Uterus (tissue), 4 donors: ENCODE measurements at regions of chr10 and their contacts with region 1.

Region 1: DNA sequence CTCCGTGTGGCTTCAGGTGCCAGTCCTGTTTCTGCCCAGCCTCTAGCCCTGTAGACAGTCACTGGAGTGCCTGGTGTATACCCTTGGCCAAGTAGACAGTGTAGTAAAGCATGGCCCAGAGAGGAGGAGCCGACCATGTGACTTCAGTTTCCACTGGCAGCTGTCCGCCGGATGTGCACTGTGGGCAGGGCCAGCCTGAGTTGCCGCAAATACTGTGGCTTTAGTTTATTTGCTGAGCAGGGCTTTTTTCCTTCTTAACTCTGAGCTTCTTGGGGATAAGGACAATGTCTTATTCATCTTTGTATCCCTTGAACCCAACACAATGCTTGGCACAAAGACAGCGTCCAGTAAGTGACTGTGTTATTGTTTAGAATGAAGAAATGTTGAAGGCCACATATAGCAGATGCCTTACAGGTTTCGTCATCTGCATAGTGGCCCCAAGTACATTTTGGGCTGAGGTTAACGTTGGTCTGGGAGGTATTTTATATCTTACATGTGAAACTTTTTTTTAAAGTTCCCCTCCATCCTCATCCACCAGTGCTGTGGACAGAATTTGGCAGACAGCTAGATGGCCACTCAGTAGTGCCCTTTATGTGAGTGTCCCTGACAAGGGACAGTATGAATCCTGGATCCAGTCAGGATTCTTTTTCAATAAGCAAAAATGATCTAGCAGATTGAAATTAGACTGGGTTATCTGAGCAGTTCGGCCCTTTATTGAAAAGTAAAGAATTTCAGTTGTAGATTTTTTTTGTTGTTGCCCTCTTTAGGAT is 40.6 kb downstream of the CYP17A1 start:
- DNase-seq: peak; percentile 81 to 85
- H3K4me3 ChIP-seq: no peak overlapping the region
- H3K27ac ChIP-seq: peak overlapping the region; percentile 61 to 70
- H3K4me1 ChIP-seq: peaks cover 0 to 11% of the 10 kb centered on the region in 2 donors
- H3K27me3 ChIP-seq: no peaks in the 10 kb centered on the region
- CTCF ChIP-seq: no peak
- POLR2A ChIP-seq: peak in 1 of 2 donors; percentile 9

Region 2: DNA sequence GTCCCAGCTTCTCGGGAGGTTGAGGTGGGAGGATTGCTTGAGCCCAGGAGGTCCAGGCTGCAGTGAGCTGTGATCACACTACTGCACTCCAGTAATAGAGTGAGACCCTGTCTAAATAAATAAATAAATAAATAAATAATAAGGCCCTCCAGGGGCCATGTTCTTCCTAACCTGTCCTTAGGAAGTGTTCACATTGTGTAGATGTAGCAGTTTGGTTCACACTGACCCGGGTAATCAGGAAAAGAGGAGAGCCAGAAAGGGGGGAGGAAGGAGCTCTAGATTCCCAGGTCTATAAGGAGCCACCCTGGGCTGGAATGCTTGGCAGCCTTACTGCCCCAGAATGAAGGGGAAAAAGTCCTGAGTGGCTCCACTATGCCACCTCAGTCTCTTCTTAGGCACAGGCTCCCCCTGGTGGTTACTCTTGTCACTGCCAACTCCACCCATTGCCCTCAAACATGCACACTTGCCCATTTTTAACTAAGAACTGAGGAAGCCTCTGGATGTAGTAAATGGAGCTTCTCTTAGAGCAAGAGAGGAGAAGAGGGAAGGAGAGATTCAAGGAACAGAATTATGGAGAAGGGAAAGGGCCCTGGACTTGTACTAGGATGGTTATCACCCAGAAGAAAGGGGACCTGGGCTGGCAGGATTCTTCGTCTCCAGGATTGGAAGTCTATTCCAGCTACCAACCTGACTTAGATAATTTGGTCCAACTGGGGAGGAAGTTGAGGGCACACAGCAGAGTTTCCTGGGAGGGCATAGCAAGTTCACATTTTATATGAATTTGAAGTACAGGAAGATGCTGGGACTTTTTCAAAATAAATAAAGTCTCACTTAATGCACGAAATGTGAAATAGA is 723.7 kb before region 1 on chr10:
- intact Hi-C with region 1: no loop called
- DNase-seq: peak; percentile 75 to 82
- H3K4me3 ChIP-seq: no peak overlapping the region
- H3K27ac ChIP-seq: no peak overlapping the region
- H3K4me1 ChIP-seq: no peaks in the 10 kb centered on the region
- H3K27me3 ChIP-seq: no peaks in the 10 kb centered on the region
- CTCF ChIP-seq: peak; percentile 78 to 84 (median 81)
- POLR2A ChIP-seq: no peak

Region 3: DNA sequence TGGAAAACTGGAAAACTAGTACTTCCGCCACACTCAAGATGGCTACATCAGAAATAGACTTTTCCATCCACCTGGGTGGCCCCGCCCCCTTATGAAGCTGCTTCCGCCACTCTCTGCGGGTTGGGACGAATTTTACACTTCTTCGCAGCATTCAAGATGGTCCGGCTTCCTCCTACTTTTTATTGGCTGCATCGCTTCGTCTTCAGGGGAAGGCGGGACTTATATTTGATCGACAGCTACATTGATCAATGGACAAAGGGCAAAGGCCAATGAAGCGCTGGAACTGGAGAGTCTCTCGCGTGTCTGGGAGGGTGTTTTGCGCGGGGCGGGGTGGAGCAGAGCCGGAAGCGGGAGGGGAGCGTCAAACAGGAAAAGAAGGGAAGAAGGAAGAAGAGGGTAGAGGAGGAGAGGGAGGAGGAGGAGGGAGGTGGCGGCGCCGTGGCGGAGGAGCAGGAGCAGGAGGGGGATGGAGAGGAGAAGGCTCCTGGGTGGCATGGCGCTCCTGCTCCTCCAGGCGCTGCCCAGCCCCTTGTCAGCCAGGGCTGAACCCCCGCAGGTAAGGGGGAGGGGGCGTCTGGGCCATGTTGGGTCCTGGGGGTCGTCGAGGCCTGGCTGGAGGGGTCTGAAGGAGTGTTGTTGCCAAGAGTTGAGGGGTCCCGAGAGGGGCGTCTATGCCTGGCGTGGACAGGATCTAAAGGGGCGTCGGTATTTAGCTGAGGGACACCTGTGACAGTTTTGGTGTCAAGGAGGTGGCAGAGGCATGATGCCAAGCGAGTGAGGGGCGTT is 52.8 kb before region 1 on chr10 and contains the start of gene WBP1L:
- intact Hi-C with region 1: loop called (anchors 10 kb)
- DNase-seq: peak; percentile 94 to 98
- H3K4me3 ChIP-seq: peak within 1 kb of the TSS; percentile 98 to 99
- H3K27ac ChIP-seq: peak within 1 kb of the TSS; percentile 88 to 90
- H3K4me1 ChIP-seq: peaks cover 0 to 4% of the 10 kb centered on the region in 2 donors
- H3K27me3 ChIP-seq: no peaks in the 10 kb centered on the region
- CTCF ChIP-seq: no peak
- POLR2A ChIP-seq: peak; percentile 72 to 78
- total RNA-seq, gene WBP1L: 27.4 to 79.2 (median 55.3) TPM

Region 4: DNA sequence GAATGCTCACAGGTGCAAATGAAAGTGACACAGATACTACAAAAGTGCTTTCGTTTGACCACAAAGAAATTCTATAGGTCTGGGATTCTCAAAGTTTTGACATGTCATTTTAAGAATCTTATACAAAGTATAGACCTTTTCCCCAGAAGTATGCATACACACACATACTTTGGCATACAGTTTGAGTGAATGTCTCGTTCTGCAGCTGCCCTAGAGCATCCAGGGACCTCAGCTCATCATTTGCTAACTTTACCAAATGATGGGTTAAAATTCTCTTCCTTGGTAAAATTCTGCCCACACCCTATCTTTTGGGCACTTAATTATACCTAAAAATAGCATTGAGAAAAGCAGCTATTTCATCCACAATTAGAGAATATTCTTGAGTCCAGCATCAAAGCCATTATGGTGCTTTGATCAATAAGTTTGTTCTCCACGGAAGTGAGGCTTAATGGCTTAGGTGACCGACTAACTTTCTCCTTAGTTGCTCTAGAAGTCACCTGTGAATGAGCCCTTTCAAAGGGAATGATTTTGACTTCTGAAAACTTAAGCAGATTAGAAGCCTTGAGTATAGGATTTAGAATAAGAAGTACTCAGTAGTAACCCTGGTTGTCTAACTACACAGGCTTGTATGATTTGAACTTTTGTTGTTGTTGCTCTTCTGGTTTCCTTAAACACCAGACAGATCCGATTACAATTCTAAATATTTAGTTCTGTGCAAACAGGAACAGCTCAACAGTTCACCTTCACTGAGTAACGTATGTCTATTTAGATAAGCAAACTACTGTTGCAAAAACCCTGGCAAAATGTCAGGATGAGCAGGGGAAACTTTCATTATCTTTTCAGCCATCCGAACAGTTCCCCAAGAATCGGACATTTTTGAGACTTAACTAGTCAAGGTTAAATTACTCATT is 192.1 kb after region 1 on chr10:
- intact Hi-C with region 1: no loop called
- DNase-seq: no peak
- H3K4me3 ChIP-seq: no peak overlapping the region
- H3K27ac ChIP-seq: no peak overlapping the region
- H3K4me1 ChIP-seq: no peaks in the 10 kb centered on the region
- H3K27me3 ChIP-seq: no peaks in the 10 kb centered on the region
- CTCF ChIP-seq: no peak
- POLR2A ChIP-seq: no peak

Region 5: GRCh38 chr10:103125323-103126267 is 329.0 kb after region 1 on chr10:
- intact Hi-C with region 1: no loop called
- DNase-seq: no peak
- H3K4me3 ChIP-seq: no peak overlapping the region
- H3K27ac ChIP-seq: peak overlapping the region; percentile 25 to 40
- H3K4me1 ChIP-seq: peaks cover 6 to 7% of the 10 kb centered on the region in 2 donors
- H3K27me3 ChIP-seq: no peaks in the 10 kb centered on the region
- CTCF ChIP-seq: no peak
- POLR2A ChIP-seq: no peak